T-cell (primary cell): ENCODE measurements at regions of chr7 and their contacts with region 1.

Region 1: DNA sequence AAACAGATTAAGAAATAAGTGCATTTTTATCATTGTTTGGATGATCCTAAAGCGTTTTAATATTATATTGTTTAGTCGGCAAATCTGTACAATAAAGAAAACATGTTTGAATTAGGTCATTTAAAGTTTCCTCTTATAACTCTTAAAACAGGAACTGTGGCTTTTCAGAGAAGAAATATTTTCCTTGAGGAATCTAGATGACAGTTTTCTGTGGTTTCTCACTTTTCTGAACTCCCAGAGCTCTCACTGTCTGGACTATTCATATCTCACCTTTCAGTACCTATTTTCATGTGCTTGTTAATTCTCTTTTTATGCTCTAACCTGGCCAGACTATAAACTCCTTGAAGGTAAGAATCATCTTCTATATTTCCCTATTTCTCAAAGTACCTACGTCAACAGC is 135.1 kb downstream of the CHN2 start:
- DNase-seq: no peak
- ATAC-seq: no peak
- H3K4me3 ChIP-seq: no peak overlapping the region
- H3K4me3 Mint-ChIP-seq: no peak overlapping the region
- H3K27ac ChIP-seq: no peak overlapping the region
- H3K27ac Mint-ChIP-seq: peak overlapping the region in 1 of 2 donors; percentile 4
- H3K4me1 ChIP-seq: peaks cover 0 to 15% of the 10 kb centered on the region in 2 experiments
- H3K4me1 Mint-ChIP-seq: peaks cover 11 to 22% (median 13%) of the 10 kb centered on the region in 3 donors
- H3K27me3 ChIP-seq: no peaks in the 10 kb centered on the region
- H3K27me3 Mint-ChIP-seq: no peaks in the 10 kb centered on the region

Region 2: GRCh38 chr7:27767374-27767773 is 1562.3 kb before region 1 on chr7:
- CTCF ChIA-PET with region 1: interaction called in 1 of 2 experiments, 15 read pairs
- POLR2A ChIA-PET with region 1: no interaction called
- DNase-seq: no peak
- ATAC-seq: no peak
- H3K4me3 ChIP-seq: no peak overlapping the region
- H3K4me3 Mint-ChIP-seq: no peak overlapping the region
- H3K27ac ChIP-seq: no peak overlapping the region
- H3K27ac Mint-ChIP-seq: no peak overlapping the region
- H3K4me1 ChIP-seq: no peaks in the 10 kb centered on the region
- H3K4me1 Mint-ChIP-seq: peaks cover 16 to 50% (median 36%) of the 10 kb centered on the region in 3 donors
- H3K27me3 ChIP-seq: no peaks in the 10 kb centered on the region
- H3K27me3 Mint-ChIP-seq: no peaks in the 10 kb centered on the region

Region 3: DNA sequence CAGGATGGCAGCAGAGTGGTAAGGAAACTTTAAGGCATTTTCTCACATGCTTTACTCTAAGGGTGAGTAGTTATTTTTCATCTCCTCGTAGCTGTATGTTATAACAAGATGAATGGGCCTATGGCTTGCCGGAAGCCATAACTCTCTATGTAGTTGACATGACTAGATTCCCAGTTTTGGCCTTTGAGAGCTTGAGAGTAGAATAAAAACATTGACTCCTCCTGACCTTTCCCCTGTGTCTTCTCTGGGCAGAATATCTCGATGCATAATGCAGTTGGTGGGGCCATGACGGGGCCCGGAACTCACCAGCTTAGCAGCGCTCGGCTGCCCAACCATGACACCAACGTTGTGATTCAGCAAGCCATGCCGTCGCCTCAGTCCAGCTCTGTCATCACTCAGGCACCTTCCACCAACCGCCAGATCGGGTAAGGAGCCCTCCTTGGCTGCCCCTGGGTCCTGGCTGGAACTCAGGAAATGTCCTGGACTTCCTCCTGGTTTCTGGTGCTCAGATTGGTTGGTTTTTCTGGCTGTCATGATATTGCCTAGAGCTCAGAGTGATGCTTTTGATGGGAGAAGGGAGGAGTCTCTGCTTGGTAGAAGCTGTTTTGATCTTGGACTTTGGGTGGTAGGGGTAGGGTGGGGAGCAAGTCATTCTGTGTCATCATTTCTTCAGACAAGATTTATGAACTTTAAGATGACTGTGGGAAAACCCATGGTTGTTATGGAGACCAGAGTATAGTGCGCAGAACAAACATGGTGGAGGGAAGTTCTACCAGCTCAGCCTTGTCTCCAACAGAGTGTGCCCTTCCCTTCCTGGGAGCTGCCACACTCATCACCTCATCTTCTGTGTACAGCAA is 759.3 kb before region 1 on chr7:
- CTCF ChIA-PET with region 1: no interaction called
- POLR2A ChIA-PET with region 1: no interaction called
- DNase-seq: no peak
- ATAC-seq: no peak
- H3K4me3 ChIP-seq: no peak overlapping the region
- H3K4me3 Mint-ChIP-seq: no peak overlapping the region
- H3K27ac ChIP-seq: no peak overlapping the region
- H3K27ac Mint-ChIP-seq: no peak overlapping the region
- H3K4me1 ChIP-seq: no peaks in the 10 kb centered on the region
- H3K4me1 Mint-ChIP-seq: peaks cover 0 to 11% (median 3%) of the 10 kb centered on the region in 3 donors
- H3K27me3 ChIP-seq: peaks cover 0 to 6% of the 10 kb centered on the region in 2 experiments
- H3K27me3 Mint-ChIP-seq: peaks cover 7 to 12% of the 10 kb centered on the region in 2 donors

Region 4: GRCh38 chr7:29297194-29297890 is 32.3 kb before region 1 on chr7:
- CTCF ChIA-PET with region 1: no interaction called
- POLR2A ChIA-PET with region 1: no interaction called
- DNase-seq: no peak
- ATAC-seq: no peak
- H3K4me3 ChIP-seq: no peak overlapping the region
- H3K4me3 Mint-ChIP-seq: no peak overlapping the region
- H3K27ac ChIP-seq: no peak overlapping the region
- H3K27ac Mint-ChIP-seq: no peak overlapping the region
- H3K4me1 ChIP-seq: no peaks in the 10 kb centered on the region
- H3K4me1 Mint-ChIP-seq: no peaks in the 10 kb centered on the region
- H3K27me3 ChIP-seq: peaks cover 0 to 4% of the 10 kb centered on the region in 2 experiments
- H3K27me3 Mint-ChIP-seq: no peaks in the 10 kb centered on the region